ENCODE measurements at regions of chr2 and their contacts with region 1.

Region 1: DNA sequence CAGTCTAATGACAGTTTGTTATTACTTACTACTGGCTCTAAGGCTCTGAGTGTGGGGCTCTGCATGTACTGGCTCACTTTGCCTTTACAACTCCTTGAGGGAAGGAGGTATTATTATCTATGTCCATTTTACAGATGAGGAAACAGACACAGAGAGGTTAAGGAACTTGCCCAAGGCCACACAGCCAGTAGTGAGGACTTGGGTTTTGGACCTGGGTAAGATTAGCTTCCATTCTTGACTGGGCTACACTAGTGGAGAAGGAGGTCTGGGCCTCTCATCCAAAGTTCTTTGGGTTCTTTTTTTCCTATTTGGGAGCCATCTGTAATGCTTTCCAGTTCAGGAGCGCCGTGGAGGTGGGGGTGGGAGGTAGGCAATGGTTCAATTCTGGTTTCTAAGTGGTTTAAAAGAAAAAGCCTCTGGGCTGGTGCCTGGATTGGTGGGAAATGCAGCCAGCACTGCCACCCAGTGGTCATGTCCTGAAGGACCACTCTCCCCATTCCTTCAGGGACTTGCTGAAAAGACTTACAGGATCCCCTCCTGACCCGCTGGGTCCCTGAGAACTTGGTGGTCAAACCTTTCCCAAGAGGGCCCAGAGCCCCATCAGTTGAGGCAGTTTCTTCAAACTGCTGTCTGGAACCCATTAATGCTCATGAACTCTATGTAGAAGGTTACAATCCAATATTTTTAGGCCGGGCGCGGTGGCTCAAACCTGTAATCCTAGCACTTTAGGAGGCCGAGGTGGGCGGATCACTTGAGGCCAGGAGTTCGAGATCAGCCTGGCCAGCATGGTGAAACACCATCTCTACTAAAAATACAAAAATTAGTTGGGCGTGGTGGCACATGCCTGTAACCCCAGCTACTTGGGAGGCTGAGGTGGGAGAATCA is 38.6 kb upstream of the NOTO start:
- DNase-seq: peak; percentile 37
- H3K4me3 ChIP-seq: no peak overlapping the region
- H3K27ac ChIP-seq: no peak overlapping the region
- H3K4me1 ChIP-seq: no peaks in the 10 kb centered on the region
- H3K27me3 ChIP-seq: no peaks in the 10 kb centered on the region
- CTCF ChIP-seq: peak; percentile 89 to 90

Region 2: GRCh38 chr2:72770879-72771461 is 392.8 kb before region 1 on chr2:
- CTCF ChIA-PET with region 1: no interaction called
- dilution Hi-C with region 1: no loop called
- in situ Hi-C with region 1: no loop called
- intact Hi-C with region 1: loop called (anchors 5 kb)
- DNase-seq: peak; percentile 60
- H3K4me3 ChIP-seq: no peak overlapping the region
- H3K27ac ChIP-seq: no peak overlapping the region
- H3K4me1 ChIP-seq: peaks cover 6% of the 10 kb centered on the region
- H3K27me3 ChIP-seq: no peaks in the 10 kb centered on the region
- CTCF ChIP-seq: peak; percentile 74 to 82

Region 3: DNA sequence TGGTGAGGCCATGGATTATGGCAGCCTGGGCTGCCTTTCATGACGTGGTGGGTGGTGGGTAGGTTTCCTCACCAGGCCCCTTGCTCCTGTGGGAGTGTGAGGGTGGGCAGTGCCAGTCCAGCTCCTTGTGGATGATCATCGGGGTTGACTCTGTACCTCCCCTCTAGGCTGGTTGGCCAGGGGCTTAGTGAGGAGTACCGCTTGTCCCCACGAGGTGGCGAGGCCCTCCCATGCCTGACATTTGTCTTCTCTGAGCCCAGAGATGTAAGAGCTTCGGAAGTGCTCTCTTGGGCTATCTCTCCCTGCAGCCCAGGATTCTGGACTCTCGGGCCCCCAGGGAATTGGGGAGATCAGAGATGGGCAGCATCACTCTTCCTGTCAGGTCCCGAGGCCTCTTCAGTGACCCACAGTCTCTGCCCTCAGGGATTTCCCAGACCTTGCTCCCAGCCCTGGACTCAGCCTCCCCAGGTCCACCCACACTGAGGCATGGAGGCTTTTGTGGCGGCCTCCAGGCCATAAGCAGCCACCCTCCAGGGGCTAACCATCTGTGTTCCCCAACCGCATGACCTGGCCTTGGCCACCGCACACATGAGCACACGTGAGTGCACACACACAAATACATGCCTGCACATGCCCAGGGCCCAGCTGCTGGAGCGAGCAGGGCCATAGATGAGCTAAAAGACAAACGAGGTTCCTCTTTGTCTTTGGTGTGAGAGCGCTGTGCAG is 270.0 kb before region 1 on chr2:
- CTCF ChIA-PET with region 1: interaction called, 22 read pairs
- dilution Hi-C with region 1: no loop called
- in situ Hi-C with region 1: loop called in 1 of 2 experiments (anchors 10 kb)
- intact Hi-C with region 1: loop called (anchors 1 kb)
- DNase-seq: peak; percentile 49
- H3K4me3 ChIP-seq: no peak overlapping the region
- H3K27ac ChIP-seq: no peak overlapping the region
- H3K4me1 ChIP-seq: peaks cover 26% of the 10 kb centered on the region
- H3K27me3 ChIP-seq: no peaks in the 10 kb centered on the region
- CTCF ChIP-seq: peak; percentile 81 to 87

Region 4: GRCh38 chr2:73027340-73027739 is 136.4 kb before region 1 on chr2:
- CTCF ChIA-PET with region 1: interaction called, 17 read pairs
- dilution Hi-C with region 1: no loop called
- in situ Hi-C with region 1: no loop called
- intact Hi-C with region 1: no loop called
- DNase-seq: no peak
- H3K4me3 ChIP-seq: no peak overlapping the region
- H3K27ac ChIP-seq: no peak overlapping the region
- H3K4me1 ChIP-seq: no peaks in the 10 kb centered on the region
- H3K27me3 ChIP-seq: no peaks in the 10 kb centered on the region
- CTCF ChIP-seq: no peak

Region 5: GRCh38 chr2:73107211-73107926 is 56.4 kb before region 1 on chr2:
- CTCF ChIA-PET with region 1: no interaction called
- dilution Hi-C with region 1: no loop called
- in situ Hi-C with region 1: no loop called
- intact Hi-C with region 1: no loop called
- DNase-seq: no peak
- H3K4me3 ChIP-seq: no peak overlapping the region
- H3K27ac ChIP-seq: no peak overlapping the region
- H3K4me1 ChIP-seq: peaks cover 16% of the 10 kb centered on the region
- H3K27me3 ChIP-seq: no peaks in the 10 kb centered on the region
- CTCF ChIP-seq: no peak

Region 6: GRCh38 chr2:73212448-73213176 is 48.9 kb after region 1 on chr2:
- CTCF ChIA-PET with region 1: no interaction called
- dilution Hi-C with region 1: no loop called
- in situ Hi-C with region 1: no loop called
- intact Hi-C with region 1: loop called (anchors 1 kb)
- DNase-seq: peak; percentile 44
- H3K4me3 ChIP-seq: no peak overlapping the region
- H3K27ac ChIP-seq: no peak overlapping the region
- H3K4me1 ChIP-seq: peaks cover 13% of the 10 kb centered on the region
- H3K27me3 ChIP-seq: no peaks in the 10 kb centered on the region
- CTCF ChIP-seq: peak; percentile 93 to 94

Region 7: DNA sequence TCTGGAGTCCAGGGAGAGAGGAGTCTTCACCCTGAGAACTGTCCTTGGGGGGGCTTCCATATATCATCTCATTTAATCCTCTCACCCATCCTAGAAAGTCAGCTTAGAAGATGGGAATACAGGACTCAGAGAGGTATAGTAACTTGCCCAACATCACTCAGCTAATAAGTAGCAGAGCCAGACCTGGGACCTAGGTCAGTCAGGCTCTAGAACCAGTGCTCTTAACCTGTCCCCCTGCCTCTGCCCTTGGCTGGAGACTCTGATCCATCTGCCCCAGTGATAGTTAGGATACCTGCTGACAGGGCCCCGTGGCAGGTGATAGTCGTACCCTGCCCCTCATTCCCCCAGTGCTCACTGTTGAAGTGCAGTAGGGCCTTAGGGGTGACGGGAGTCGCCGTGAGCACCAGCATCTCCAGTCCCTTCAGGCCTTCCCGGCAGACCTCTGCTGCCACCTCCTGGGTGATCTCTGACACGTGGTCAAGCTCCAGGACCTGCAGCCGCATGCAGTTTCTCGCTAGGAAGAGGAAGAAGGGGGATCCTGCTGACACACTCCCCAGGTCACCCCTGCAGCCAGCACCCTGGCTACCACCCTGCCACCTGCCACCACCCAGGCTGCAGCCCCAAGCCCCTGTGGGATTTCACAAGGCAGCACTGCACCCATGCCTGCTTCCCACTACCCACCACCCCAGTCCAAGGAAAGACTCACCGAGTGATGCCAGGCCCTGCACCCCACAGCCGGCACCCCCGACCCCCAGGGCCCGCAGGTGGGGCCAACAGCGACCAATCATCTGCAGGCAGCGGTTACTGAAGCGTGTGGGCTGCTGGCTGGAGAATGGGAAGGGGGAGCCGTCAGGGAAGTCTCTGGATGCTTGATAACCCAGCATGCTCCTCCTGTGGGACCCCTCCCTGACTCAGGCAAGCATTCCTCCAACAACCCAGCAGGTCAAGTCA is 96.6 kb after region 1 on chr2:
- CTCF ChIA-PET with region 1: no interaction called
- dilution Hi-C with region 1: no loop called
- in situ Hi-C with region 1: no loop called
- intact Hi-C with region 1: loop called (anchors 1 kb)
- DNase-seq: peak; percentile 39
- H3K4me3 ChIP-seq: no peak overlapping the region
- H3K27ac ChIP-seq: no peak overlapping the region
- H3K4me1 ChIP-seq: peaks cover 7% of the 10 kb centered on the region
- H3K27me3 ChIP-seq: no peaks in the 10 kb centered on the region
- CTCF ChIP-seq: peak; percentile 45 to 70

Region 8: DNA sequence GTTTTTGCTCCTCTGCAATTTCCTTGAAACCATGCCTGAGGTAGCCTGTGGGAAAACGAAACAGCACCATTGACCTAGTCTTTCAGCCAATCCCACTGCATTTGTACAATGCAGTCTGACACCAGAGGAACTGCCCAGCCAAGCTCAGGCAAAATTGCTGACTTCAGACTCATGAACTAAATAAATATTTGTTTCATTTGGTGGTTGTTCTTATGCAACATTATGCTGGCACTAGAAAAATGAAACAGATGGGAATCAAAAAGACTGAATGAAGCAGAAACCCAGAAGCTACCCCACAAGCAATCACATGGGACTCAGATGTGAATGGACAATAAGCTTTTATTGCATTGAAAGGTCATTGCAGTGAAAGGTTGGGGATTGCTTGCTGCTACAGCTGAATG is 476.8 kb after region 1 on chr2:
- CTCF ChIA-PET with region 1: no interaction called
- dilution Hi-C with region 1: no loop called
- in situ Hi-C with region 1: no loop called
- intact Hi-C with region 1: no loop called
- DNase-seq: no peak
- H3K4me3 ChIP-seq: no peak overlapping the region
- H3K27ac ChIP-seq: no peak overlapping the region
- H3K4me1 ChIP-seq: no peaks in the 10 kb centered on the region
- H3K27me3 ChIP-seq: no peaks in the 10 kb centered on the region
- CTCF ChIP-seq: no peak

Measured in mammary epithelial cell (primary cell).